Calu3 (cell line): ENCODE measurements at regions of chr3 and their contacts with region 1.

Region 1: DNA sequence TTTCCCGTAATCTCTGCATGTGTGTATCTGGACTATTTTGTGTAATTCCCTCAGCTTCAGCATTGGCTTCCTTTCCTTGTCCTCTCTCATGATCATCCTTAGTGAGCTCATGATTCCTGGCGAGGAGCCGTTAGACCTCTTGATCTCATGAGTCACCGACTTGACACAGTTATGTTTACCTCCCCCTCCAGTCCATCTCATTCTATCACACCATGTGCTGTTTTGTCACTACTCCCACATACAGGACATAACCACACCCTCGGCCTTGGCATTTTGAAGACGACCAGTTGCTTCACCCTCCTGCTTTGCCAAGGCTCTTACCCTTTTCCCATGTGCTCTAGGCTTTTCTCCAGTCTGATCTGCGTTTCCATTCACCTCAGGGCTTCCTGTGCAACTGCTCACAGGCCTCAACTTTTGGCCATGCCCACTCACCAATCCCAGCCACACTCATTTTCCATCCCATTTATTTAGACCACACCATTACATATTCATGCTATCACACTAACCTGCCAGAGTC is 41.5 kb downstream of the CP start:
- DNase-seq: peak; percentile 63
- H3K4me3 Mint-ChIP-seq: no peak overlapping the region
- H3K27ac Mint-ChIP-seq: no peak overlapping the region
- H3K4me1 Mint-ChIP-seq: no peaks in the 10 kb centered on the region
- H3K27me3 Mint-ChIP-seq: no peaks in the 10 kb centered on the region
- CTCF ChIP-seq: no peak

Region 2: GRCh38 chr3:149129326-149130205 is 50.5 kb before region 1 on chr3 and contains the start of gene HPS3:
- CTCF ChIA-PET with region 1: interaction called, 5 read pairs
- intact Hi-C with region 1: loop called (anchors 5 kb)
- DNase-seq: peak; percentile 98
- H3K4me3 Mint-ChIP-seq: peak within 1 kb of the TSS; percentile 94
- H3K27ac Mint-ChIP-seq: peak within 1 kb of the TSS; percentile 91
- H3K4me1 Mint-ChIP-seq: peaks cover 29% of the 10 kb centered on the region
- H3K27me3 Mint-ChIP-seq: no peaks in the 10 kb centered on the region
- CTCF ChIP-seq: peak; percentile 16
- total RNA-seq, gene HPS3: 46.4 and 49.5 TPM in 2 replicates